IMR-90 (cell line): ENCODE measurements at regions of chr15 and their contacts with region 1.

Region 1: DNA sequence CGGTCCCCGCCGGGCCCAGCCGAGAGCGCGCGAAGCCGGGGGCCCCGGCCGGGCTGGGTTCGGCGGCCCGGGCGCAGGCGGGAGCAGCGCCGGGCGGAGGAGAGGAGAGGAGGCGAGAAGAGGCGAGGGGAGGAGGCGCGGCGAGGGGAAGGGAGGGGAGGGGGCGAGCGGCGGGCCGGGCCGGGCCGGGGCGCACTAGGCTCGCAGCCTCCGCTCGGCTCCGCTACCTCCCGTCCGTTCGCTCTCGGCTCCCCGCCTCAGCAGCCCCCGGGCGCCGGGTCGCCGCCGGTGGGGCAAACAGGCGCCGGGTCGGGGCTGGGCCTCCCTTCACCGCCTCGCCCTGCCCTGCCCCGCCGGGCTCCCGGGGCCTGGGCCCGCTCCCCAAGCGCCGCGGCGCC is 336 bp downstream of the INSYN1 start:
- DNase-seq: no peak
- ATAC-seq: peak; percentile 71
- H3K4me3 ChIP-seq: peak overlapping the region; percentile 37
- H3K27ac ChIP-seq: no peak overlapping the region
- H3K4me1 ChIP-seq: no peaks in the 10 kb centered on the region
- H3K27me3 ChIP-seq: peaks cover 84% of the 10 kb centered on the region
- CTCF ChIP-seq: no peak
- POLR2A ChIP-seq: no peak
- RAD21 ChIP-seq: no peak

Region 2: DNA sequence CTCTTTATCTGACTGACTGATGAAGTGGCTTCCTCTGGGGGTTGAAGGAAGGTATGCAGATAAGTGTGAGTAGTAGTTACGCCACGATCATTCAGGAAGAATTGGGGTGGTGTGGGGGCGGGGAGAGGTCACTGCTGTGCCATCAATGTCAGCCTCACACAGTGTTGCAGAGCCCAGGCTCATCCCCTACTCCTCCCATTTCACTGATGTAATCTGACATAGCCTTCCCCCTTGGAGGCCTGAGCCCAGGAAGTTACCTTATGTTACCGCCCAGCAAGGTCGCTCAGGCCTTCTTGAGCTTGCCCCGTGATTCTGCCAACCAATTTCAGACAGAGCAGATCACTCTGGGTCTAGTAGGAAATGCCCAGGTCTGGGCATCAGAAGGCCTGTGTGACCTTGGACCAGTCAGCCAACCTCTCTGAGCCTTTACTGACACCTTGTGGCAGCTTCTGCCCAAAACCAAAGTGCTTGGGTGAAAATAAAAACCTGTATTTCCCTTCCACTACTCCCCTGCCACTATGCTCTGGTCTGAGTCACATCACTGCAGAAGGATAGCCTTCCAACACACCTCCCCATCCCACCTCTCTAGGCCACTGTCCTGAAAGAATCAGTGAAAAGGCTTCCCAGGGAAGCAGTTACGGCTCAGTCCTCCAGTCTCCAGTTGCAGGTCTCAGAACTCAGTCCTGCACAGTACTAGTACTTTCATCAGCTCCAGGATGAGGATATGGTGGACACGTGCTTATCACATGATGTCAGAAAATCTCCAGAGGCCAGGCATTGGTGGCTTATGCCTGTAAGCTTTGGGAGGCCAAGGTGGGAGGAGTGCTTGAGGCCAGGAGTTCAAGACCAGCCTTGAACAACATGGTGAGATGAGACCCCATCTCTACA is 28.5 kb after region 1 on chr15:
- CTCF ChIA-PET with region 1: no interaction called
- POLR2A ChIA-PET with region 1: no interaction called
- dilution Hi-C with region 1: no loop called
- in situ Hi-C with region 1: no loop called
- intact Hi-C with region 1: loop called (anchors 1 kb)
- DNase-seq: peak; percentile 21
- ATAC-seq: peak; percentile 66
- H3K4me3 ChIP-seq: no peak overlapping the region
- H3K27ac ChIP-seq: no peak overlapping the region
- H3K4me1 ChIP-seq: no peaks in the 10 kb centered on the region
- H3K27me3 ChIP-seq: peaks cover 45% of the 10 kb centered on the region
- CTCF ChIP-seq: peak; percentile 45
- POLR2A ChIP-seq: no peak
- RAD21 ChIP-seq: peak; percentile 51